Activated naive CD8-positive, alpha-beta T cell treated with anti-CD3 and anti-CD28 coated beads, Interleukin-2, amount 10 ng/mL, durations not matched to agents 7 days and 5 days (primary cell): ENCODE measurements at regions of chr10 and their contacts with region 1.

Region 1: DNA sequence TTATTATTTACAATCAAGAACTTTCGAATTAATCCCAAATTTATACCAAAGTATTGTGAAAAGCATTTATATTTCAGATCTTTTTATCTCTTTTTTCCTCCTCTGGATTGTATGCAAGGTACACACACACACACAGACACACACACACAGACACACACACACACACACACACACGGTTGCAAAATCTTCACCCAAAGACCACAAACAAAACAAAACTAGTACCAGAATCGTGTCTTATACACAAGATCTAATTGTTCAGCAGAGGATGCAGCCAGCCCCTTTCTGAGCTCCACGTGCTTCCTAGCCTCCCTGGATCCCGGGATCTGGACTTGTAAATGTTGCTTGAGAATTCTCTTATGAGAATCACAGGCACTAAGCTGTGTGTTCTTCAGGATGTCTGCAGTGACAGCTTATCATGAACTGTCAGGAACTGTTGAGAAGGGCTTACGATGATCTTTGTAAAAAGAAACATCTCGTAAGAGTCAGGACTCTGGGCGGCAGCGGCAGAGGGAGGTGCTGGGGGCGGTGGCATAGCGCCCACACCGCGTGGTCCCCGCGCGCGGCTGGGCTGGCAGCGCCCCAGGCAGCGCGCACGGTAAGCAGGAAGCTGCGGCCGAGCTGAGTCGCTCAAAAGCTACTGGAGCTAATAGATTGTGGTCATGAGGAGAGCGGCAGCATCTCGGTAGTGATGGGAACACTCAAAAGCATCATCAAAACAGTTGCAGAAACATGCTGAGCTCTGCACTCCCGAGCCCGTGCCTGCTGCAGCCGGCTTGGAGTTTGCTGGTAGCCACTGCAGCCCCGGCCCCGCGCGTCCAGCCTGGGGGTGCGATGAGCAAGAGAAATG is 277.6 kb downstream of the GATA3 start:
- DNase-seq: peak; percentile 85
- ATAC-seq: peak; percentile 97
- H3K4me3 Mint-ChIP-seq: peak overlapping the region; percentile 96
- H3K27ac Mint-ChIP-seq: peak overlapping the region; percentile 88
- H3K4me1 Mint-ChIP-seq: peaks cover 33% of the 10 kb centered on the region
- H3K27me3 Mint-ChIP-seq: peaks cover 4% of the 10 kb centered on the region

Region 2: GRCh38 chr10:8053446-8054290 is 278.4 kb before region 1 on chr10:
- POLR2A ChIA-PET with region 1: interaction called, 30 read pairs
- DNase-seq: peak; percentile 97
- ATAC-seq: peak; percentile 59
- H3K4me3 Mint-ChIP-seq: peak overlapping the region; percentile 98
- H3K27ac Mint-ChIP-seq: peak overlapping the region; percentile 96
- H3K4me1 Mint-ChIP-seq: peaks cover 34% of the 10 kb centered on the region
- H3K27me3 Mint-ChIP-seq: peaks cover 28% of the 10 kb centered on the region

Region 3: GRCh38 chr10:8059959-8060703 is 272.0 kb before region 1 on chr10:
- POLR2A ChIA-PET with region 1: interaction called, 30 read pairs
- DNase-seq: peak; percentile 70
- ATAC-seq: peak; percentile 58
- H3K4me3 Mint-ChIP-seq: peak overlapping the region; percentile 91
- H3K27ac Mint-ChIP-seq: peak overlapping the region; percentile 92
- H3K4me1 Mint-ChIP-seq: peaks cover 57% of the 10 kb centered on the region
- H3K27me3 Mint-ChIP-seq: no peaks in the 10 kb centered on the region

Region 4: GRCh38 chr10:8138471-8138870 is 193.6 kb before region 1 on chr10:
- POLR2A ChIA-PET with region 1: interaction called, 16 read pairs
- DNase-seq: no peak
- ATAC-seq: no peak
- H3K4me3 Mint-ChIP-seq: peak overlapping the region; percentile 88
- H3K27ac Mint-ChIP-seq: peak overlapping the region; percentile 97
- H3K4me1 Mint-ChIP-seq: peaks cover 36% of the 10 kb centered on the region
- H3K27me3 Mint-ChIP-seq: no peaks in the 10 kb centered on the region

Region 5: GRCh38 chr10:8306685-8307364 is 25.3 kb before region 1 on chr10:
- POLR2A ChIA-PET with region 1: no interaction called
- DNase-seq: no peak
- ATAC-seq: no peak
- H3K4me3 Mint-ChIP-seq: no peak overlapping the region
- H3K27ac Mint-ChIP-seq: no peak overlapping the region
- H3K4me1 Mint-ChIP-seq: peaks cover 5% of the 10 kb centered on the region
- H3K27me3 Mint-ChIP-seq: peaks cover 8% of the 10 kb centered on the region

Region 6: DNA sequence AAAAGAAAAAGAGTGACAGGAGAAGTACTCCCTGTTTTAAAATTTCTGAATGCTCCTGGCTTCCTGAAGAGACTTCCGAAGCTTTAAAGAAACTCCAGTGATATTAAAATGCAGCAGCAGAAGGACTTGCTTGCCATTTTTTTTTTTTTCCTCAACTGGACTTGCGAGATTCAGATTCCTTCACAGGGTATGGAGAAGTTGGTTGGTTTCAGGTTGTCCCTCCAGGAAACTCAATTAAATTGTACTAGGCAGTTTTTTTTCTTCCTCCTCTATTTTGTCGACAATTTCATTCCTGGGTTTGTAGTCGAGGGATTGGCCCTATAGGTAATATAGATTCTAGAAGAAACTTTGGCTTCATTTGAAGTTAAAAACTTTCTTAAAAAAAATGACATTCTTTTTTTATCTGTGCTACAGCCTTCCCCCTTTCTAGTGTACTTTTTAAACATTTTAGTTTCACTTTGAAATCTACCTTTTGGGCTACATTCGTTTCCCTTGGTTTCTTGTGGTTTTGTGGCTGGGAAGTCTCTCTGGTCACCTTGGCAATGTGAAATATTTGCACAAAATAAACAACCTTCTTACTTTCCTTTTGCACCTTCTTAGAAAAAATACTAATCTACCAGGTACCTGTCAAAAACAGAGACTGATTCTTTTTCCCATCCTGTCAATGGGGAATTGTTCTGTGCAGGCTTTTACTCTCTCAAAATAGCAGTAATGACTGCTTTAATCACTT is 72.5 kb after region 1 on chr10:
- POLR2A ChIA-PET with region 1: interaction called, 24 read pairs
- DNase-seq: no peak
- ATAC-seq: peak; percentile 55
- H3K4me3 Mint-ChIP-seq: peak overlapping the region; percentile 82
- H3K27ac Mint-ChIP-seq: peak overlapping the region; percentile 90
- H3K4me1 Mint-ChIP-seq: peaks cover 55% of the 10 kb centered on the region
- H3K27me3 Mint-ChIP-seq: no peaks in the 10 kb centered on the region